ENCODE measurements at regions of chr10 and their contacts with region 1.

Region 1: GRCh38 chr10:70146489-70147258 is at the start of gene TYSND1:
- DNase-seq: peak; percentile 96
- ATAC-seq: peak; percentile 86
- H3K4me3 Mint-ChIP-seq: peak within 1 kb of the TSS; percentile 92
- H3K27ac Mint-ChIP-seq: peak within 1 kb of the TSS; percentile 99
- H3K4me1 Mint-ChIP-seq: peaks cover 35% of the 10 kb centered on the region
- H3K27me3 Mint-ChIP-seq: no peaks in the 10 kb centered on the region
- total RNA-seq, gene TYSND1: 12.0 to 13.4 TPM

Region 2: DNA sequence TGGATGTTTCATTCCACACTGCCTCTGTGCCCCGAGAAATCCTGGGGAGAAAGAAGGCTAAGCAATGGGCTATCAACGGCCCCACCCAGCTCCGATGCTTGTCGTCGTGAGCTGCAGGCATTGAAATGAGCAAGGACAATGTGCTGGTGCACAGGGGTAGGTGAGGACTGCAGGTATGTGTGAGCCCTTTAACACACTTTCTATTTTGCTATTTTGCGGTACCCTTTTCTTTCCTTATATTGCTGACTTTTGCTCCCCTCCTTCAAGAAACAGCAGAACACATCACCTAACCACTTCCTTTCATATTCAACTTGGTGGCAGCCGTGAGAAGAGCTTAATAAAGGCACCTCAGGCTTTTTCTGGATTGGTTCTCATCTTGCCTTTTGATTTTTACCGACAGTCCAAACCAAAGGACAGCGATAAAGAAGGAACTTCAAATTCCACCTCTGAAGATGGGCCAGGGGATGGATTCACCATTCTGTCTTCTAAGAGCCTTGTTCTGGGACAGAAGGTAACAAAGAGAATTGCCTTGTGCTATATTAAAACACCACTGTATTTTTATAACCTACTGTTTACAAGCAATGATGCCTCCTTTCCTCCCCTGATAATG is 53.2 kb before region 1 on chr10:
- CTCF ChIA-PET with region 1: interaction called, 33 read pairs
- POLR2A ChIA-PET with region 1: interaction called, 22 read pairs
- DNase-seq: peak; percentile 63
- ATAC-seq: peak; percentile 80
- H3K4me3 Mint-ChIP-seq: peak overlapping the region; percentile 78
- H3K27ac Mint-ChIP-seq: peak overlapping the region; percentile 86
- H3K4me1 Mint-ChIP-seq: peaks cover 46% of the 10 kb centered on the region
- H3K27me3 Mint-ChIP-seq: no peaks in the 10 kb centered on the region

Region 3: DNA sequence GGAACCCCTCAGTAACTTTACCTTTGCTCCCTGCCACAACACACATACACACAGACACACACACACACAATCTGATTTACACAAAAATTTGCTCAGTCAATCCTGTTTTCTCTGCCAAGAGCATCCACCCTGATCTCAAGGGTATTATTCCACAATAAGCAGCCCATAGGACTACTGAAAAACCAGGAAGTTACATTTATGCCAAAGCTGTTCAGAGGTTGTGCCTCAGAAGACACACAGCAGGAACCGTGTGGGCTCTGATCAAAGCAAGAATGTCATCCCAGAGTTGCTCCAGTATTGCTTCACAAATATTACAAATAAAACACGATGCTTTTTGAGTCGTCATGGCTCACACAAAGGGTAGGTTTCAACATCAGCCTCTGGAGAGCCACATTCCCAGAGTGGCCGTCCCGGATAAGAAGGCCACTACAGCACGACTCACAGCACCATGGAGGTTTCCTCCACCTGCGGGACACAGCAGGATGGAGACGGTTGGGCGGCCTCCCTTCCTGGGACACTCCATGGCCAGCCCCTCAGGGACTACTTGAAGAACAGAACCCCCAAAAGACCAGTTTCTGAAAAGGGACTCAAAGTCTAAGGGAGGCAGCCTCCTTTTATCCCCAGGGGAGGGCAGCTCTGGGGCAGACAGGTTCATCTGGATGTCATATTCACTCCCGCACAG is 15.7 kb before region 1 on chr10:
- CTCF ChIA-PET with region 1: interaction called, 31 read pairs
- POLR2A ChIA-PET with region 1: interaction called, 15 read pairs
- DNase-seq: no peak
- ATAC-seq: no peak
- H3K4me3 Mint-ChIP-seq: peak overlapping the region; percentile 85
- H3K27ac Mint-ChIP-seq: no peak overlapping the region
- H3K4me1 Mint-ChIP-seq: peaks cover 35% of the 10 kb centered on the region
- H3K27me3 Mint-ChIP-seq: no peaks in the 10 kb centered on the region

Region 4: DNA sequence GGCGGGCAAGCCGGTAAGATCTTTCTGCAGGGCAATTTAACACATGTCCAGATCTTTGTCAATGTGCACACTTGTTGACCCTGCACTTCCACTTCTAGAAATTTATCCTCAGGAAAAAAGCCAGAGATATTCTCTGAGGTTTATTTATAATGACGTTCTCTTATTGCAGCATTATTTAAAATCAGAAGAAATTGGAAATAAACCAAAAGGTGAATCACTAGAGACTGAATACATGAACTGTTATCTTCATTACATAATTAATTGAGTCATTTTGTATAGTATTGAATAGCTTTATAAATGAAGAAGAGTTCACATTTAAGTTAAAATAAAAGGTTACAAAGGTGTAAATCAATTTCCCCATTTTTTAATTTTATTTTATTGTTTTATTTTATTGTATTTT is 39.9 kb after region 1 on chr10:
- CTCF ChIA-PET with region 1: interaction called, 10 read pairs
- POLR2A ChIA-PET with region 1: no interaction called
- DNase-seq: no peak
- ATAC-seq: no peak
- H3K4me3 Mint-ChIP-seq: no peak overlapping the region
- H3K27ac Mint-ChIP-seq: no peak overlapping the region
- H3K4me1 Mint-ChIP-seq: peaks cover 5% of the 10 kb centered on the region
- H3K27me3 Mint-ChIP-seq: peaks cover 17% of the 10 kb centered on the region

Region 5: GRCh38 chr10:70233109-70233938 is 86.7 kb after region 1 on chr10 and contains the start of gene PPA1:
- CTCF ChIA-PET with region 1: interaction called, 19 read pairs
- POLR2A ChIA-PET with region 1: no interaction called
- DNase-seq: peak; percentile 99
- ATAC-seq: peak; percentile 93
- H3K4me3 Mint-ChIP-seq: peak within 1 kb of the TSS; percentile 78
- H3K27ac Mint-ChIP-seq: peak within 1 kb of the TSS; percentile 79
- H3K4me1 Mint-ChIP-seq: peaks cover 45% of the 10 kb centered on the region
- H3K27me3 Mint-ChIP-seq: peaks cover 2% of the 10 kb centered on the region
- total RNA-seq, gene PPA1: 175 TPM

Region 6: DNA sequence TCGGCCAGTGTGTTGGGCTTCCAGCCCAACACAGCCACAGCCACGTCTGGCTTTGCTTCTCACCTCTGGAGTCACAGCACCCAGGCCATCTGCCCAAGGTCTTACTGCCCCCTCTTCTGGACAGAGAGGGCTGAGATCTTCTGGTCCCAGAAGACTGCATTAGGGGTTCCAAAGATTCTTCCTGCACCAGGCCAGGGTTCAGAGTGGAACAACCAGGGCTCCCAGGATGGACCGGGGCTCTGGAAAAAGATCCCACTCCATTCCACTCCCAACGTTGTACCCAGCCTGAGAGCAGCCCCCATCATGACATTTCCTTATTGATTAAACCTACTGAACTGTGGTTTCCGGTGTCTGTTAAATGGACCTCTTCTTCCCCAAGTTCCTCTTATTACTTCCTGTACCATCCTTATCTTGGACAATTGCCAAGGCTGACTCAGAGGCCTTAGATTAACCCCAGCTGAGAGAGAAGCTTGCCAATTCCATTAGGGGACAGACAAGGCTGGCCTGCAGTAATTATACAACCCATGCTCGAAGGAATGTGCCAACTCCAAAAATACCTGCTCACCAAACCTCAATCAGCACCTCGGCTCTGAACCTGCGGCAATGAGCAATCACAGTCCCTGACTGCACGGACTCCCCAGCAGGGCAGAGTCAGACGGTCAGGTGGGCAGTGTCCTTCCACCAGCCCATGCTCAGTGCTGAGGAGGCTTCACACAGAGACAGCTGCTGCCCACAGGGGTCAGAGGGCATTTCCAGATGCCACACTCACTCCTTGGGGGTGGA is 185.0 kb after region 1 on chr10:
- CTCF ChIA-PET with region 1: no interaction called
- POLR2A ChIA-PET with region 1: no interaction called
- DNase-seq: peak; percentile 41
- ATAC-seq: peak; percentile 49
- H3K4me3 Mint-ChIP-seq: no peak overlapping the region
- H3K27ac Mint-ChIP-seq: peak overlapping the region; percentile 56
- H3K4me1 Mint-ChIP-seq: peaks cover 35% of the 10 kb centered on the region
- H3K27me3 Mint-ChIP-seq: no peaks in the 10 kb centered on the region

Measured in activated CD8-positive, alpha-beta T cell treated with anti-CD3 and anti-CD28 coated beads, Interleukin-2, amount 10 ng/mL, durations not matched to agents 7 days and 5 days (primary cell).